ENCODE measurements at regions of chr20 and their contacts with region 1.

Region 1: GRCh38 chr20:20761301-20761700 is 48.9 kb upstream of the RALGAPA2 start:
- DNase-seq: peak; percentile 87
- H3K4me3 ChIP-seq: no peak overlapping the region
- H3K27ac ChIP-seq: peak overlapping the region; percentile 54
- H3K4me1 ChIP-seq: peaks cover 53% of the 10 kb centered on the region
- H3K27me3 ChIP-seq: no peaks in the 10 kb centered on the region
- CTCF ChIP-seq: no peak
- POLR2A ChIP-seq: peak; percentile 56

Region 2: DNA sequence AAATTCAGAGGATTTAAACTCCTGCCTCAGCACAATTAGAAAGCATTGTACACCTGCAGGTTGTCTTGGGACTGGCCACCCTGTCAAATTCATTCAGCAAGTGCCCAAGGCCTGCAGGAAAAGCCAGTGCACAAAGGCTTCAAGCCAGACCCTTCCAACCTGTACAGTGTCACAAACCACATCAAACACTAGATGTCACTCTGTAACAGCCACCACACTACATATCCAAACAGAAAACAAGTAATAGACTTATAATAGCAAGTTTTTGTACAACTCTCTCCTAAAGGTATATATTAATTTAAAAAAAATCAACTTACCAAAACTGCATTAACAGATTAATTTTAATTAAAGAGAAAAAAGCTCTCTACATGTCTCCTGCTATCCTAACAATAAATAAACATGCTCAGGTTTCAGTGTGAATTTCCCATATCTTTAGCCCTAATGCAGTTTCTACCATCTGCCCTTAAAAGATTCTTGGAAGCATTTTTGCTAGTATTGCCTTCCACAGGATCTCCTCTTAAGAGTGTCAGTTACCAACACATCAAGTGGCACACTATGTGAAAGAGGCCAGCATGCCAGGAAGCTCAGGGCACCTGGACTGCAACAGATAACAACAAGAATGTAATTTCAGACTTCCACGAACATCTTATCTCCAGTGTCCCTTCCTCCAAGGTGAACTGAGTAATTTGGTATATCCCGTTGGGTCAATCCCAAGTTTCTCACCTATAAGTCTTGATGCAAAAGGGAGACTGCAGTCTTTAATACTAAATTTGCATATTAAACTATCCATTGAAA is 96.3 kb before region 1 on chr20:
- CTCF ChIA-PET with region 1: interaction called, 11 read pairs
- POLR2A ChIA-PET with region 1: no interaction called
- dilution Hi-C with region 1: no loop called
- intact Hi-C with region 1: loop called (anchors 2 kb)
- DNase-seq: peak; percentile 77
- H3K4me3 ChIP-seq: no peak overlapping the region
- H3K27ac ChIP-seq: no peak overlapping the region
- H3K4me1 ChIP-seq: peaks cover 26% of the 10 kb centered on the region
- H3K27me3 ChIP-seq: no peaks in the 10 kb centered on the region
- CTCF ChIP-seq: peak; percentile 52 to 60
- POLR2A ChIP-seq: peak; percentile 27

Region 3: DNA sequence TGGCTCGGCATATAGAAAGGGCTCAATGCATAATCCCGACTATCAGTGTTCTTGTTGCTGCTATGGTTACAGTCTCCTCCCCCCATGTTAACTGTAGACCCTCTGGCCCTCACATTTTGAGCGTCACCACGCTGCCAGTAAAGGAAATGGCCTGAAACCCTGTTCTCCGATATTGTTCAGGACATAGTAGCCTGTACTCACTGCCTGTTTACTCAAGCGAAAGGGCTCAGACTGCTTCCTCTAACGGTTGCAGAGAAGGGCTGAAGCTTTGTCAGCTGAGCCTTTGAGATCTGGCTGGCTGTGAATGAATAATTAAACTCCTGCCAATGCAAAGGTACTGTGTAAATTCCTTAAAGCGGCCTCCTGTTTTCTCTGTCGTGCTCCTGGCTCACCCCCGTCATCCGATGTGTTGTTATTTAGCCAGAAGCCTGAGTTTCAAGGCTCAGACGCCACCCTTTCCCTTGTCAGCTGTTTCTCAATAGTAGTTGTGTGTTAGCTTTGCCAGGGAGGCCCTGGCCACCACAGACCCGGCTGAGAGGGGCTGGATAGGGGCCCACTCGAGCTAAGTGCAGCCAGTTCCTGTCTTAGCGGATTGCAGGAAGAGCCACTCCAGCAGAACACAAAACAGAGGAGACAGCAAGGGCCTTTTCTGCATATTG is 17.7 kb before region 1 on chr20:
- CTCF ChIA-PET with region 1: interaction called, 7 read pairs
- POLR2A ChIA-PET with region 1: interaction called, 5 read pairs
- dilution Hi-C with region 1: no loop called
- intact Hi-C with region 1: loop called (anchors 1 kb)
- DNase-seq: peak; percentile 97
- H3K4me3 ChIP-seq: peak overlapping the region in 1 of 3 experiments; percentile 7
- H3K27ac ChIP-seq: peak overlapping the region; percentile 96
- H3K4me1 ChIP-seq: peaks cover 15% of the 10 kb centered on the region
- H3K27me3 ChIP-seq: no peaks in the 10 kb centered on the region
- CTCF ChIP-seq: no peak
- POLR2A ChIP-seq: peak; percentile 49

Region 4: DNA sequence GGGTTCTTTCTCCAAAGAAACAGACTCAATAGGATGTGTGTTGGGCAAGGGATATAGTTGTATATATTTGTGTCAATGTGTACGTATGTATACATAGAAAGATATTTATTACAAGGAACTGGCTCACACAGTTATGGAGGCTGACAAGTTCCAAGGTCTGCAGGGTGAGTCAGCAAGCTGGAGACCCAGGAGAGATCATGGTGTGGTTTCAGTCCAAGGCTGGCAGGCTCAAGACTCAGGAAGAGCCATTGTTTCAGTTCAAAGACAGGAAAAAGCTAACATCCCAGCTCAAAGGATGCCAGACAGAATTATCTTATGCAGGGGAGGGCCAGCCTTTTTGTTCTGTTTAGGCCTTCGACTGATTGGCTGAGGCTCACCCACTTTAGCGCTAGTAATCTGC is 41.0 kb after region 1 on chr20:
- CTCF ChIA-PET with region 1: interaction called, 10 read pairs
- POLR2A ChIA-PET with region 1: interaction called, 3 read pairs
- dilution Hi-C with region 1: no loop called
- intact Hi-C with region 1: loop called (anchors 2 kb)
- DNase-seq: peak; percentile 86
- H3K4me3 ChIP-seq: no peak overlapping the region
- H3K27ac ChIP-seq: peak overlapping the region; percentile 27
- H3K4me1 ChIP-seq: peaks cover 16% of the 10 kb centered on the region
- H3K27me3 ChIP-seq: peaks cover 0 to 6% of the 10 kb centered on the region in 2 experiments
- CTCF ChIP-seq: no peak
- POLR2A ChIP-seq: no peak

Measured in endothelial cell of umbilical vein (primary cell).